CD14-positive monocyte (primary cell): ENCODE measurements at regions of chr10 and their contacts with region 1.

Region 1: GRCh38 chr10:63720072-63720537 is 198.9 kb downstream of the REEP3 start:
- DNase-seq: peak in 2 of 3 donors; percentile 47 to 67
- H3K4me3 ChIP-seq: no peak overlapping the region
- H3K4me3 Mint-ChIP-seq: no peak overlapping the region
- H3K27ac ChIP-seq: no peak overlapping the region
- H3K27ac Mint-ChIP-seq: no peak overlapping the region
- H3K4me1 ChIP-seq: peaks cover 21 to 23% of the 10 kb centered on the region in 2 donors
- H3K4me1 Mint-ChIP-seq: peaks cover 32% of the 10 kb centered on the region
- H3K27me3 ChIP-seq: no peaks in the 10 kb centered on the region
- H3K27me3 Mint-ChIP-seq: peaks cover 0 to 11% (median 6%) of the 10 kb centered on the region in 3 donors
- CTCF ChIP-seq: peak; percentile 99

Region 2: GRCh38 chr10:63166742-63167258 is 553.3 kb before region 1 on chr10:
- intact Hi-C with region 1: loop called (anchors 5 to 10 kb)
- DNase-seq: peak; percentile 44 to 58 (median 49)
- H3K4me3 ChIP-seq: no peak overlapping the region
- H3K4me3 Mint-ChIP-seq: no peak overlapping the region
- H3K27ac ChIP-seq: no peak overlapping the region
- H3K27ac Mint-ChIP-seq: no peak overlapping the region
- H3K4me1 ChIP-seq: no peaks in the 10 kb centered on the region
- H3K4me1 Mint-ChIP-seq: peaks cover 3% of the 10 kb centered on the region
- H3K27me3 ChIP-seq: no peaks in the 10 kb centered on the region
- H3K27me3 Mint-ChIP-seq: no peaks in the 10 kb centered on the region
- CTCF ChIP-seq: peak; percentile 84

Region 3: DNA sequence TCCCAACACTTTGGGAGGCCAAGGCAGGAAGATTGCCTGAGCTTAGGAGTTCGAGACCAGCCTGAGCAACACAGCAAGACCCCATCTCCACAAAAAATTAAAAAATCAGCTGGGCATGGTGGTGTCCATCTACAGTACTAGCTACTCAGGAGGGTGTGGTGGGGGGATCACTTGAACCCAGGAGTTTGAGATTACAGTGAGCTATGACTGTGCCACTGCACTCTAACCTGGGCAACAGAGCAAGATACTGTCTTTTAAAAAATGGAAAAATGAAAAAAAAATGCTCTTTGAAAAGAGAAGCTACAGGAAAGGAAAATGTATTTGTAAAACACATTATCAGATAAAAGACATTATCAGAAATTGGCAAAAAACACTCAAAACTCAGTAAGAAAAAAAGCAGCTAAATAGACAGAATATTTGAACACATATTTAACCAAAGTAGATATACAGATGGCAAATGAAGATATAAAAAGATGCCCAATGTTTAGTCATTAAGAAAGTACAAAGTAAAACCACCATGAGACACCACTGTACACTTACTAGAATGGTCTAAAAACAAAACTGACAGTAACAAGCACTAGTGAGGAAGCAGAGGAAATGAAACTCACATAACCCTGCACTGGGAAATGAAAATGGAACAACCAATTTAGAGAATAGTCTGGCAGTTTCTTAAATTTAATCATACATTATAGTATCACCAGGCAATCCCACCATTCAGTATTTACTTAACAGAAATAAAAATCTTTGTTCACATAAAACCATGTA is 546.5 kb before region 1 on chr10:
- intact Hi-C with region 1: loop called (anchors 5 to 10 kb)
- DNase-seq: peak; percentile 32 to 61 (median 45)
- H3K4me3 ChIP-seq: peak overlapping the region in 1 of 3 experiments; percentile 9
- H3K4me3 Mint-ChIP-seq: peak overlapping the region in 1 of 2 donors; percentile 69
- H3K27ac ChIP-seq: peak overlapping the region; percentile 14 to 24
- H3K27ac Mint-ChIP-seq: peak overlapping the region; percentile 66 to 79 (median 74)
- H3K4me1 ChIP-seq: peaks cover 20 to 26% of the 10 kb centered on the region in 2 donors
- H3K4me1 Mint-ChIP-seq: peaks cover 30% of the 10 kb centered on the region
- H3K27me3 ChIP-seq: no peaks in the 10 kb centered on the region
- H3K27me3 Mint-ChIP-seq: no peaks in the 10 kb centered on the region
- CTCF ChIP-seq: no peak

Region 4: GRCh38 chr10:63629363-63630084 is 90.6 kb before region 1 on chr10:
- intact Hi-C with region 1: loop called (anchors 5 kb)
- DNase-seq: peak; percentile 55 to 74 (median 70)
- H3K4me3 ChIP-seq: peak overlapping the region; percentile 66 to 85 (median 81)
- H3K4me3 Mint-ChIP-seq: peak overlapping the region; percentile 94 to 95
- H3K27ac ChIP-seq: peak overlapping the region; percentile 84 to 86
- H3K27ac Mint-ChIP-seq: peak overlapping the region; percentile 86 to 96 (median 92)
- H3K4me1 ChIP-seq: peaks cover 42 to 50% of the 10 kb centered on the region in 2 donors
- H3K4me1 Mint-ChIP-seq: peaks cover 47% of the 10 kb centered on the region
- H3K27me3 ChIP-seq: no peaks in the 10 kb centered on the region
- H3K27me3 Mint-ChIP-seq: no peaks in the 10 kb centered on the region
- CTCF ChIP-seq: peak; percentile 87

Region 5: DNA sequence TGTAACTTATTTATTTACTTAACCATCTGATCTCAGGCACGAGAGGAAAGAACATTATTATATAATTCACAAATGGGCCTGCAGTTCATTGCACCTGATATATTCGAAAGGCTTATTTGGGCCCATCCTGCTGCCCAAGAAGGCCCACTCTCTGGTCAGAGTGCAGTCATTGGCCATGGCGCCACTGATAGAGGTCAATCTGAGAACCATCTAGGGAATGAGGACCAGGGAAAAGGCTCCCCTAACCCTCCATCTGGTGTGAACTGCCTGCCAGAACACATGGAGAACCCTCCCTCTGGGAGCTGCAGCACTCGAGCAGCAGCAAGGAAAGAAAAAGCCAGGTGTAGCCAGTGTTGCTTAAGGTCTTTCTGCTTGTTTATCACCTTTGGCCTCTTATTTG is 62.3 kb before region 1 on chr10:
- intact Hi-C with region 1: no loop called
- DNase-seq: no peak
- H3K4me3 ChIP-seq: no peak overlapping the region
- H3K4me3 Mint-ChIP-seq: no peak overlapping the region
- H3K27ac ChIP-seq: no peak overlapping the region
- H3K27ac Mint-ChIP-seq: no peak overlapping the region
- H3K4me1 ChIP-seq: no peaks in the 10 kb centered on the region
- H3K4me1 Mint-ChIP-seq: no peaks in the 10 kb centered on the region
- H3K27me3 ChIP-seq: no peaks in the 10 kb centered on the region
- H3K27me3 Mint-ChIP-seq: no peaks in the 10 kb centered on the region
- CTCF ChIP-seq: no peak